Left ventricle myocardium inferior (tissue), 1 donor: ENCODE measurements at regions of chr9 and their contacts with region 1.

Region 1: GRCh38 chr9:127943731-127944144 is 6.1 kb upstream of the DPM2 start:
- DNase-seq: peak; percentile 86
- H3K4me3 ChIP-seq: no peak overlapping the region
- H3K27ac ChIP-seq: peak overlapping the region; percentile 5
- H3K4me1 ChIP-seq: peaks cover 59% of the 10 kb centered on the region
- H3K27me3 ChIP-seq: no peaks in the 10 kb centered on the region
- CTCF ChIP-seq: peak; percentile 91

Region 2: GRCh38 chr9:128034821-128035764 is 91.4 kb after region 1 on chr9:
- intact Hi-C with region 1: loop called (anchors 5 kb)
- DNase-seq: peak; percentile 54
- H3K4me3 ChIP-seq: no peak overlapping the region
- H3K27ac ChIP-seq: no peak overlapping the region
- H3K4me1 ChIP-seq: peaks cover 5% of the 10 kb centered on the region
- H3K27me3 ChIP-seq: no peaks in the 10 kb centered on the region
- CTCF ChIP-seq: peak; percentile 92

Region 3: DNA sequence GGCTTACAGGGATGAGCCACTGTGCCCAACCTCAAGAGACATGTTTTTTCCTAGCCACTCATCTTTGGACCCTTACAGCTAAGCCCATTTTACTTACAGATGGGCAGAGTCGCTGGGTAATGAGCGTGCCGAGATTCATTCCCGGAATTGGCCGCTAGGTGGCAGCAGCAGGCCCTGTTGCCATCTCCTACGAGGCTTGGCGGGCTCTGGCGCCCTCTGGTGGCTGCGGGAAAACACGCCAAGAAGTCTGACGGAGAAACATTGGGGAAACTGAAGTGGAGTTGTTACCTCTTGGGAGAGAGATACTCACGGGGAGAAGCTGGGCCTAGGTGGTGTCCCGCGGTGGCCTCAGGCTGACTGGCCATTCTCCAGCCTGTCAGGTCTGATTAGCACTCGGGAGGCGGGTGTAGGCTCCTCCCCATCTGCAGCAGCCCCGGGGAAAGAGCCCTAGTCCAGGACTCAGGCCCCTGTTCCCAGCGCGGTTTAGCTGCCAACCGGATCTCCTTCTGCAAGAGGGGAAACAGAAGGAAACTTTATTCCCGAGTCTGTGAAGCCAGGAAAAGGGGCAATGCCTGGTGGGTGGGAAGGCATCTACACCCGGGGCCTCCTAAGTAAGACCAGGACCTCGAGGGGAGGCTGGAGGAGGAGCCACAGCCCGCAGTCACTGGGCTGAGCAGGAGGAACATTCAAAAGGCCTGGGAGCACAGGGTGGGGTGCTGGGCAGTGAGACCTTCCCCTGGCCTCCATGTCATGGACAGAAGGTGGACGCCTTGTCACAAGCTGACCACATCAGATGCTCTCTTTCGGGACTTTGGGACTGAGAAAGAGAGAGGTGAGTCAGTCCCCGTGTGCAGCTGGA is 174.1 kb after region 1 on chr9:
- intact Hi-C with region 1: loop called (anchors 10 kb)
- DNase-seq: peak; percentile 95
- H3K4me3 ChIP-seq: no peak overlapping the region
- H3K27ac ChIP-seq: no peak overlapping the region
- H3K4me1 ChIP-seq: peaks cover 11% of the 10 kb centered on the region
- H3K27me3 ChIP-seq: no peaks in the 10 kb centered on the region
- CTCF ChIP-seq: peak; percentile 100